ENCODE measurements at regions of chr18 and their contacts with region 1.

Region 1: GRCh38 chr18:54224379-54225014 is at the start of gene MBD2:
- DNase-seq: peak; percentile 98
- ATAC-seq: peak; percentile 100
- total RNA-seq, gene MBD2: 45.1 TPM

Region 2: DNA sequence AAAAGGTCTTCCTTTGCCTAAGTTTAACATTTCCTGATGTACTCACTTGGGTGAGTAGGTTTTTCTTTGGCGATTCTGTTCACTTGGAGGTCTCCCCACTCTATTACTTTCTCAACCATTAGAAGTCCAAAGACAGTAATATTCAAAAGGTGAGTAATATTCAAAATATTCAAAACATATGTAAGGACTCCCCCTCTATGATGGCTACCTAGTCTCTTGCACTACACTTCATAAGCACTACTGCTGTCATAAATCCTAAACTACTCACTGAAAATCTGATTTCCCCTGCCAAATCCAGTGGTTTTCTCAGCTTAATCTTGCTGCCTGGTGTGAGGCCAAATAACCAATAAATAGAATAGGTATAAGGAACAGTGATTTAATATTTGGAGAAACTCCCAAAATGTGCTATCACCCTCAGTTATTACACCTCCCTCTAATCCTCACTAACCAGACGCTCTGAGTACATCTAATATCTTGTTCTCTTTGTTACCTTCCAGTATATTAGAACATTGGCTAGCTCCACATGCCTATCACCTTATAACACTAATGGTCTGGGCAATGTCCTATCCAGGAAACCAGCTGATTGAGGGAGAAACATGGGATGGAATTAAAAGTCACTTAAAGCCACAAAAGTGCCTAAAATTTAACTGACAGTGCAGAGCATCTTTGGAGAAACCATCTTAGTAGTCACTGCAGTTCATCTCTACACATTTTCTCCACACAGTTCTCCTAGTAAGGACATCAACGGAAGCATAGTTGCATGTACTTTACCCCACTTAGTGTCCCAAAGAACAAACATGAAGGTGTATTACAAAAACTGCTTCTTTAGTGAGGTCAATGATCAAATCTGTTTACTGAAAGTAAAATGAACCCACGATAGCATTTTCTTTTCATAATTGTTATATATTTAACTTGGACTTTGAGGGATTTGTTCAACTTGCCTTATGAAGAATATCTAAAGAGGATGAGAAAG is 54.8 kb before region 1 on chr18:
- intact Hi-C with region 1: loop called (anchors 5 kb)
- DNase-seq: no peak
- ATAC-seq: no peak

Measured in Right ventricle myocardium inferior (tissue), 1 donor.